Pancreas (tissue), 10 donors: ENCODE measurements at regions of chr1 and their contacts with region 1.

Region 1: GRCh38 chr1:43367904-43368645 is at the start of gene ELOVL1:
- DNase-seq: peak; percentile 92 to 98 (median 95)
- ATAC-seq: peak; percentile 93 to 96 (median 96)
- H3K4me3 ChIP-seq: peak within 1 kb of the TSS; percentile 66 to 96 (median 84)
- H3K27ac ChIP-seq: peak within 1 kb of the TSS; percentile 76 to 93 (median 90)
- H3K4me1 ChIP-seq: peaks cover 14 to 18% (median 15%) of the 10 kb centered on the region in 3 donors
- H3K27me3 ChIP-seq: no peaks in the 10 kb centered on the region
- CTCF ChIP-seq: no peak
- total RNA-seq, gene ELOVL1: 22.8 to 44.9 (median 29.5) TPM

Region 2: DNA sequence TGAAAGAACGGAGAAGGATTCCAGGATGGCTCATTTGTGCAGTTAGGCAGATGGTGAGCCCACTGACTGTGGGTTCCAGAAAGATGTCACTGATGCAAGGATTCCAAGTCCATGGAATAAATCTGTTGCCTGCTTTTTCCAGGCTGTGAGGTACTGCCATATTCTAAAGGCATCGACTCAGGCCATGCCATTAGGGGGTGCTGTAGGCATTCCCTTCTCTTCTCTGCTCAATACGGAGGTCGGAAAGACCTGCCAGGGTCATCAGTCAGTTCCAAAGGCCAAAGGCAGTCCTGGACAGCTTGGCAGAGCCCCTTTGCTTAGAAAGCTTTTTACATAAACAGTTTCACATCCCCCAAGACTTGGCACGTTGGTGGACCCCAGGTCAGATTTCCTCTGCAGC is 130.0 kb before region 1 on chr1:
- intact Hi-C with region 1: loop called in 2 of 3 experiments (anchors 10 kb)
- DNase-seq: peak in 4 of 6 donors; percentile 63 to 80 (median 70)
- ATAC-seq: peak; percentile 94 to 97 (median 95)
- H3K4me3 ChIP-seq: no peak overlapping the region
- H3K27ac ChIP-seq: no peak overlapping the region
- H3K4me1 ChIP-seq: no peaks in the 10 kb centered on the region
- H3K27me3 ChIP-seq: no peaks in the 10 kb centered on the region
- CTCF ChIP-seq: peak; percentile 38 to 62 (median 56)